BJ (cell line): ENCODE measurements at regions of chr14 and their contacts with region 1.

Region 1: DNA sequence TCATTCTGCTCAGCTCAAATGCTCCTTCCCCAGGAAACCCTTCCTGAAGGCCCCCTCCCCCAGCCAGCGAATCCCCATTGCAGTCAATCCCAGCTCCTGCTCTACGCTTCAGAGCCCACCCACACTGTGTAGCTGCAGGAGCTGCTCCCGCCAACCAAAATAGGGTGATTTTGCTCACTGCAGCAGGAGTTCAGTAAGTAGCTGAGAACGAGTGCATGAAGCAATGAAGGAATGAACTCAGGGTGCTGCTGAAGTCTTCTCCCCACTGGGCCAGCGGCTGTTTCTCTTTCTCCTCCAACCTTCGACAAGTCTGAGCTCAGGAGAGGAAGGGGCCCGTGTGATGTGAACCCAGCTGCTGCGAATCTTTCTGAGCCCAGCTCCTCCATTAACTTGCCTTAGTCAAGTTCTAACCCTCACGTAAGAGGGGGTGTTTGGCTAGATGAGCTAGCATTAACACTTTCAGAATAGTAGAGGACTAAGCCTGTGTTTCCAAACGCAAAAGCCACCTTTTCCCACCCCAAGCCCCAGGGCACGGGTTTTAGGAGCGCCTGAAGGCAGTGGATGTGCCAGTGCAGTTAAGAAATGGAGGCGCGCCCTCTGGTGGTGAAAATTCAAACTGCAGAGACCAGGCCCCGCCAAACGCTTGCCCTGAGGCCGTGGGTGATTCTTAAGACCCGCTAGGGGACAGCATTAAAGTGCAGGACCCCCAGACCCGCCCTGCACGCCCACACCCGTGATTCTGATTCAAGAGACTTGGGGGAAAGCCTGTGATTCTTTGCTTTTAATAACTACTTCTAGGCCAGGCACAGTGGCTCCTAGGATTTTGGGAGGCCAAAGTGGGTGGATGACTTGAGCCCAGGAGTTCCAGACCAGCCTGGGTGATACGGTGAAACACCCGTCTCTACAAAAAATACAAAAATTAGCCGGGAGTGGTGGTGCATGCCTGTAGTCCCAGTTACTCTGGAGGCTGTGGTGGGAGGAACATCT is 11.9 kb upstream of the SERPINA4 start:
- DNase-seq: no peak
- H3K4me3 ChIP-seq: no peak overlapping the region
- H3K27me3 ChIP-seq: no peaks in the 10 kb centered on the region
- CTCF ChIP-seq: peak; percentile 88

Region 2: GRCh38 chr14:94536823-94537222 is 12.5 kb before region 1 on chr14:
- CTCF ChIA-PET with region 1: interaction called, 27 read pairs
- POLR2A ChIA-PET with region 1: no interaction called
- DNase-seq: no peak
- H3K4me3 ChIP-seq: no peak overlapping the region
- H3K27me3 ChIP-seq: no peaks in the 10 kb centered on the region
- CTCF ChIP-seq: no peak

Region 3: DNA sequence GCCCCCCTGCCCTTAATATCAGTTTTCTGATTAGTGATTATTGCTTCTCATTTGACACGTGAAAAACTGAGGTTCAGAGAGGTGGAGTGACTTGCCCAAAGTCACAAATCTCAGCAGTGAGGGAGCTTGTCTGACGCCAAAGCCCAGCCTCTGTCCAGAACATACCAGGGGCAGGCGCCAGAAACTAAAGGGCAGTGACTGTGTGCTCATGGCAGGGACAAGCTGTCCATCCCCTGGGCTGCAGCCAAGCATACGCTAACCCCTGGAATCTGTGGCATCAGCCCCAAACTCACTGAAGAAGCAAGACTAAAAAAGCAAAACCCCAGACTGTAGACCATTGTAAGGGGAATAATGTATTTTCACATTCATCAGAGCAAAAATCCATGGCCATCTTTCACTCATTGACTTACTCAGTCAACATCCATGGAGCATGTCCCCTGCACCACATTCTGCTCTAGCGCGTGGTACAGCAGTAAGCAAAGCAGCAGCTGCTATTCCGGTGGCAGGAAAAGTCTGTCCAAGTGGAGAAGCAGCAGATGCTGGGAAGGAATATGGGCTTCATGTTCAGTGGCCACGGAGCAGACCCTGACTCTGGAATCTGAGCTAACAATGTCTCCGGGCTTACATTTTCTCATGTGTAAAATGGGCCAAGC is 10.5 kb after region 1 on chr14:
- CTCF ChIA-PET with region 1: interaction called, 36 read pairs
- POLR2A ChIA-PET with region 1: no interaction called
- DNase-seq: no peak
- H3K4me3 ChIP-seq: no peak overlapping the region
- H3K27me3 ChIP-seq: no peaks in the 10 kb centered on the region
- CTCF ChIP-seq: no peak

Region 4: GRCh38 chr14:94571950-94572349 is 22.7 kb after region 1 on chr14:
- CTCF ChIA-PET with region 1: interaction called, 27 read pairs
- POLR2A ChIA-PET with region 1: no interaction called
- DNase-seq: no peak
- H3K4me3 ChIP-seq: no peak overlapping the region
- H3K27me3 ChIP-seq: no peaks in the 10 kb centered on the region
- CTCF ChIP-seq: no peak